A549 (cell line): ENCODE measurements at regions of chr5 and their contacts with region 1.

Region 1: GRCh38 chr5:149636851-149637246 is 55.6 kb downstream of the ARHGEF37 start:
- DNase-seq: peak; percentile 70 to 72
- ATAC-seq: peak; percentile 79 to 93
- H3K4me3 ChIP-seq: no peak overlapping the region
- H3K27ac ChIP-seq: no peak overlapping the region
- H3K4me1 ChIP-seq: peaks cover 10% of the 10 kb centered on the region; the same call in 2 of the 3 replicates
- CTCF ChIP-seq: peak; percentile 92
- EP300 ChIP-seq: no peak
- POLR2A ChIP-seq: no peak
- RAD21 ChIP-seq: peak; percentile 95 to 96

Region 2: GRCh38 chr5:149809931-149810617 is 173.2 kb after region 1 on chr5:
- CTCF ChIA-PET with region 1: interaction called, 10 read pairs
- POLR2A ChIA-PET with region 1: no interaction called
- DNase-seq: no peak
- ATAC-seq: no peak
- H3K4me3 ChIP-seq: no peak overlapping the region
- H3K27ac ChIP-seq: 0 out of 6 replicates have a peak overlapping the region, but pooled peaks of 1 of the 2 experiments have one; percentile 21
- H3K4me1 ChIP-seq: peaks cover 19% of the 10 kb centered on the region
- CTCF ChIP-seq: no peak
- EP300 ChIP-seq: no peak
- POLR2A ChIP-seq: no peak
- RAD21 ChIP-seq: no peak

Region 3: DNA sequence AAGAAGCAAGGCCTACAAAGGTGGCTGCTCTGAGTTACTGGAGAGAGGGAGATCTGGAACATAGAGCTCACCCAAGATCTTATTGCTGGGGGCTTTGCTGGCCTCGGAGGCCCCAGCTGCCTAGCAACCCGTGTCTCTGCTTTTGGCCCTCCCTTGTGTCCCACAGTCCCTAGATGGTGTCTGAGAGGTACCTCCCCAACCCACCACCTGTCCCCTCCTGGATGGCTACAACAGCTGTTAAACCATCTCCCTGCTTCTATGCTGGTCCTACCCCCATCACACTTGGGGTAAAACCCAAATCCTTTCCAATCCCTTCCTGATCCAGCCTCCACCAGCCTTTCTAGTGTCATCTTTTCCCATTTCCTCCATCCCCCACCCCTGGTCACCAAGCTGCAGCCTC is 179.8 kb after region 1 on chr5:
- CTCF ChIA-PET with region 1: interaction called, 579 read pairs
- POLR2A ChIA-PET with region 1: no interaction called
- DNase-seq: no peak
- ATAC-seq: no peak
- H3K4me3 ChIP-seq: no peak overlapping the region
- H3K27ac ChIP-seq: no peak overlapping the region
- H3K4me1 ChIP-seq: no peaks in the 10 kb centered on the region
- CTCF ChIP-seq: no peak
- EP300 ChIP-seq: no peak
- POLR2A ChIP-seq: no peak
- RAD21 ChIP-seq: no peak

Region 4: GRCh38 chr5:149828161-149828884 is 191.5 kb after region 1 on chr5:
- CTCF ChIA-PET with region 1: interaction called, 579 read pairs
- POLR2A ChIA-PET with region 1: no interaction called
- DNase-seq: peak; percentile 91 to 96
- ATAC-seq: peak; percentile 89 to 94
- H3K4me3 ChIP-seq: no peak overlapping the region
- H3K27ac ChIP-seq: peak overlapping the region; percentile 29 to 67; a peak in 4 of 6 replicates
- H3K4me1 ChIP-seq: peaks cover 5% of the 10 kb centered on the region; the same call in 1 of the 3 replicates
- CTCF ChIP-seq: peak; percentile 97
- EP300 ChIP-seq: no peak
- POLR2A ChIP-seq: no peak
- RAD21 ChIP-seq: peak; percentile 97